ENCODE measurements at regions of chr1 and their contacts with region 1.

Region 1: DNA sequence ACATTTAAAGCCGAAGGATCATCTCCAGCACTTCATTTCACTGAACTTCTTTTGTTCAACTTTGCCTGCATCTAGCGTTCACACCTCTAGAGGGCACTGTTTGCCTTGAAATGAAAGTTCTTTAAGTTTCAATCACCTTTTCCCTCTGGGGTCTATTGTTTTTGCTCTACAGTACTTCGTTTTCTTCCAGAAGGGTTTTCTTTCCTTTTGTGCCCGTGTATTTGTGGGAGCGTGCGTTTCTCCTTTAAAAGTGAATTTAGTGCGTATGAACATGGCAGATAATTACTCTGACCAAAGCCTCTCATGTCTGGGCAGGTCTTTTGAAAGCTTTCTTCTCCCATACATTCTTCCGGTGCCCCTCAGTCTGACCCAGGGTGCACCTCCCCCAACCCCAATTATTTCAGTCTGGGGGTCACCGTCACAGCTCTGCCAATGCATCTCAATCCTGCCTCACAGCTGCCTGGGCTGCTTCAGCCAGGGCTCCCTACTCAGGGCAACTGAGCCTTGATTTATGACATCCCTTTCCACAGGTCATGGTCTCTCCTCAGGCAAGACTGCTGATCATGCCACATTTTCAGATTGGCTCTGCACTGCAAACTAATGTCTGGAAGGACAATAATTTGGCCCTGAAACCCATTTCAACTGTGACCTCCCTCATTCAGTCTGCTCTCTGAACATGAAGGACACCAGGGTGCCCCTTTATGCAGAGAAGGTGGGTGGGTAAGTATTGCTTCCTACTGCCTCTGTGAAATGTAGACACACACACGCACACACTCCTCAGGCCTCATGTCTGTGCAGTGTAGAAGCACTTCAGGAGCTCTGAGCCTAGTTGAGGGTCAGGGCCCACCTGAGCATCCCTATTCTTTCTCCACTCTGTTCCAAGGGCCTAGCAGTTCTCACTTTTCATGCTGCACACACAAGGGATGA is 88.6 kb downstream of the NUF2 start:
- DNase-seq: peak; percentile 85
- ATAC-seq: peak; percentile 52
- H3K4me3 ChIP-seq: no peak overlapping the region
- H3K27ac ChIP-seq: no peak overlapping the region
- H3K4me1 ChIP-seq: no peaks in the 10 kb centered on the region
- H3K27me3 ChIP-seq: peaks cover 40% of the 10 kb centered on the region
- CTCF ChIP-seq: peak; percentile 97

Region 2: DNA sequence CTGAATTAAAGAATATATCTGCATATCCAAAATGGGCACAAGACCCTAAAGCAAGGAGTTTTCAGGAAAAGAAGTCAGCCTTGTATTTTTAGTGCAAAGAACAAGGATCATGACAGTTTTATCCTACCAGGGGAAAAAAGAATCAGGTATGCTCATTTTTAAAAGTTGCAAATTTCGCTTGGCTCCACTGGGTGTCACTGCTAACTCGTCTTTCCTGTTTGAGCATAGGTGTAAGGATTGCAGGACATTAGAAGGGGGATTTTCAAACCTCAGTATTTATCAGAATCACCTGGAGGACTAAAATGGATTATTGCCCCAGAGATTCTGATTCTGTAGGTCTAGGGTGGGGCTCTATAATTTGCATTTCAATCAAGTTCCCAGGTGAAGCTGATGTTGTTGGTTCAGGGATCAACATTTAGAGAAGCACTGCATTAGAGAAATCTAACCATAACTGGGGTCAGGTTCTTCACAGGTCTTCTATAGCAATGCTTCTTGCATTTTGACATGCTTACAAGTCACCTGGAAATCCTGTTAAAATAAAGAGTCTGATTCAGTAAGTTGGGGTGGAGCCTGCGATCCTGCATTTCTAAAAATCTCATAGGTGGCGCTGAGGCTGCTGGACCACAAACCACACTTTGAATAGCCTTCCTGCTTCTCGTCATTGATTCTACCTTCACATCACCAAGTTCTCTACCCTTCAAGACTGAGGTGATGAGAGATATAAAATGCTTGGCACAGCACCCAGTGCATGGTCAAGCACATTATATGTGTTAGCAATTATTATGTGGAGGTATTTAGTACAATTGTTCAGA is 49.0 kb before region 1 on chr1:
- CTCF ChIA-PET with region 1: no interaction called
- POLR2A ChIA-PET with region 1: no interaction called
- intact Hi-C with region 1: loop called (anchors 1 kb)
- DNase-seq: peak; percentile 60
- ATAC-seq: peak; percentile 83
- H3K4me3 ChIP-seq: no peak overlapping the region
- H3K27ac ChIP-seq: no peak overlapping the region
- H3K4me1 ChIP-seq: no peaks in the 10 kb centered on the region
- H3K27me3 ChIP-seq: peaks cover 8% of the 10 kb centered on the region
- CTCF ChIP-seq: peak; percentile 82

Measured in PC-3 (cell line).